Activated CD8-positive, alpha-beta T cell treated with anti-CD3 and anti-CD28 coated beads, Interleukin-2, amount 10 ng/mL, durations not matched to agents 7 days and 5 days (primary cell): ENCODE measurements at regions of chr6 and their contacts with region 1.

Region 1: GRCh38 chr6:132768051-132768517 is 10.4 kb upstream of the VNN2 start:
- DNase-seq: peak; percentile 54
- ATAC-seq: peak; percentile 66
- H3K4me3 Mint-ChIP-seq: no peak overlapping the region
- H3K27ac Mint-ChIP-seq: no peak overlapping the region
- H3K4me1 Mint-ChIP-seq: peaks cover 19% of the 10 kb centered on the region
- H3K27me3 Mint-ChIP-seq: no peaks in the 10 kb centered on the region

Region 2: DNA sequence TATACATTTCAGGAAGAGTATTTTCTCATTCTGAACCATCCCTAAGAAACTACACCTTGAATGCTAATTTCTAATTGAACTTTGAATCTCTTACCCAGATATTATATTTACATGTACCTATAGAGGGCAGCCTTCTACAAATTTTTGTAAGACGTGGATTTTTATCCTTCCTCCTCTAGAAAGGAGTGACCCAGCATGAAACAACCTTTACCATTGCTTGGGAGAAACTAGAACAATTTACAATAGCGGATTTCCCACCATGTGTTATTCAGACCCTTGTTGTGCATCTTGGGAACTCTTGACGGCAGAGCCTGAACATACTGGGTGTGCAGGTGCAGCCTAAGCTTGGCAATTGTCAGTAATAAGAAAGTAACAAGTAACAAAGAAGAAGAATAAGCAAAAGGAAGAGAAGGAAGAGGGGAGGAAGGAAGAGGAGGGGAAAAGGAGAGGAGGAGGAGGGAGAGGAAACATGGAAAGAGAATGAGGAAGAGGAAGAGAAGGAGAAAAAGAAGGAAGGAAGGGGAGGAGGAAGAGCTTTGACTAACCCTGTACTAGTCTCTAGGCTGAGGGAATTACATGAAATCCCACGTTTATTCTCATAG is 98.3 kb before region 1 on chr6:
- CTCF ChIA-PET with region 1: interaction called, 115 read pairs
- POLR2A ChIA-PET with region 1: interaction called, 3 read pairs
- DNase-seq: no peak
- ATAC-seq: peak; percentile 60
- H3K4me3 Mint-ChIP-seq: no peak overlapping the region
- H3K27ac Mint-ChIP-seq: no peak overlapping the region
- H3K4me1 Mint-ChIP-seq: peaks cover 18% of the 10 kb centered on the region
- H3K27me3 Mint-ChIP-seq: peaks cover 11% of the 10 kb centered on the region

Region 3: DNA sequence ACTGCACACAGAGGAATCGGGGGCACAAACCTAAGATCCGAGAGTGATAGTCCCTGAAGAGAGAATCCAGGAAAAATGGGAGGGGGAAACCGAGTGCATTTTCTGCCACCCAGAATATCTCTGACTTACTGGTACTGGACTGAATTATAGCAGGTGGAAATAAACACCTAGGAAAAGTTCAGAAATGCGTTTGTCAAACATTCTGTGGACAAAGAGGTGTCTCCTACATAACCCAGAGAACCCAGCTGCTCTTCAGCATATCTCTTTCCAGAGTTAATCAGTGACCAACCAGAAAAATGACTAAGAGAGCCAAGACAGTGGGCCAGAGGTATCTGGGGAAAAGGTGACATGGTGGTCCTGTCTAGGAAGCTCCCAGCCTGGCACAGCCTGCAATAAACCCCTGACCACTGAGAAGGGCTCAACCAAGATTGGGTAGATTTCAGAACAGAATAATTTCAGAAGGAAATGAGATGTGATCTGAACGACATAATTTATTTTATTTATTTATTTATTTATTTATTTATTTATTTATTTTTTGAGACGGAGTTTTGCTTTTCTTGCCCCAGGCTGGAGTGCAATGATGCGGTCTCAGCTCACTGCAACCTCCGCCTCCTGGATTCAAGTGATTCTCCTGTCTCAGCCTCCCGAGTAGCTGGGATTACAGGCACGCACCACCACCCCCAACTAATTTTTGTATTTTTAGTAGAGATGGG is 48.2 kb before region 1 on chr6:
- CTCF ChIA-PET with region 1: no interaction called
- POLR2A ChIA-PET with region 1: no interaction called
- DNase-seq: no peak
- ATAC-seq: no peak
- H3K4me3 Mint-ChIP-seq: no peak overlapping the region
- H3K27ac Mint-ChIP-seq: no peak overlapping the region
- H3K4me1 Mint-ChIP-seq: no peaks in the 10 kb centered on the region
- H3K27me3 Mint-ChIP-seq: peaks cover 2% of the 10 kb centered on the region

Region 4: GRCh38 chr6:132750455-132751248 is 17.4 kb before region 1 on chr6:
- CTCF ChIA-PET with region 1: interaction called, 13 read pairs
- POLR2A ChIA-PET with region 1: interaction called, 4 read pairs
- DNase-seq: no peak
- ATAC-seq: no peak
- H3K4me3 Mint-ChIP-seq: no peak overlapping the region
- H3K27ac Mint-ChIP-seq: peak overlapping the region; percentile 61
- H3K4me1 Mint-ChIP-seq: peaks cover 30% of the 10 kb centered on the region
- H3K27me3 Mint-ChIP-seq: no peaks in the 10 kb centered on the region

Region 5: GRCh38 chr6:132813173-132813856 is 45.2 kb after region 1 on chr6:
- CTCF ChIA-PET with region 1: interaction called, 3 read pairs
- POLR2A ChIA-PET with region 1: interaction called, 31 read pairs
- DNase-seq: peak; percentile 49
- ATAC-seq: peak; percentile 23
- H3K4me3 Mint-ChIP-seq: peak overlapping the region; percentile 89
- H3K27ac Mint-ChIP-seq: peak overlapping the region; percentile 97
- H3K4me1 Mint-ChIP-seq: peaks cover 41% of the 10 kb centered on the region
- H3K27me3 Mint-ChIP-seq: peaks cover 10% of the 10 kb centered on the region